RWPE1 (cell line): ENCODE measurements at regions of chr2 and their contacts with region 1.

Region 1: GRCh38 chr2:129914538-129915302 is 64.7 kb upstream of the RAB6C start:
- DNase-seq: no peak
- H3K27ac ChIP-seq: no peak overlapping the region
- CTCF ChIP-seq: no peak

Region 2: GRCh38 chr2:129518937-129519336 is 395.8 kb before region 1 on chr2:
- CTCF ChIA-PET with region 1: no interaction called
- POLR2A ChIA-PET with region 1: no interaction called
- DNase-seq: no peak
- H3K27ac ChIP-seq: no peak overlapping the region
- CTCF ChIP-seq: no peak

Region 3: DNA sequence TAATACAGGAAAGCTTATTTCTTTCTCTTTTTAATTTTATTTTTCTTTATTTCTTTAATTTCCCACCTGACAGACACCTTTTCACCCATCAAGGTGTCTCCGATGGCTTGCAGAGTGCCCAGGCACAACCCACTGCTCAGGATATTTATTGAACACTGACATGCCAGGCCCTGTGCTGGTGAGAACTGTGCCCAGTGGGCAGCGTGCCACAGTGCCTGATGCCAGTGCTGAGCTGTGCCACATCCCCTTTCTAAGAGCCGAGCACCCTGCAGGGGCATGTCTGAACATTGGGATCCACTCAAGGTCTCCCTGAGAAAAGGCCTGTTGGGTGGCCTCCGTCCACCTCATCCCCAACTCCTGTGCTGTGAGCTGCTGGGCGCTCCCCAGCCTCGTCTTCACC is 93.8 kb before region 1 on chr2:
- CTCF ChIA-PET with region 1: interaction called, 10 read pairs
- POLR2A ChIA-PET with region 1: no interaction called
- DNase-seq: no peak
- H3K27ac ChIP-seq: no peak overlapping the region
- CTCF ChIP-seq: no peak